ENCODE measurements at regions of chr19 and their contacts with region 1.

Region 1: GRCh38 chr19:49468746-49469447 is 5.1 kb upstream of the FLT3LG start:
- DNase-seq: peak; percentile 98
- H3K4me3 Mint-ChIP-seq: peak overlapping the region; percentile 87
- H3K27ac Mint-ChIP-seq: peak overlapping the region; percentile 100
- H3K4me1 Mint-ChIP-seq: peaks cover 42% of the 10 kb centered on the region
- H3K27me3 Mint-ChIP-seq: no peaks in the 10 kb centered on the region

Region 2: DNA sequence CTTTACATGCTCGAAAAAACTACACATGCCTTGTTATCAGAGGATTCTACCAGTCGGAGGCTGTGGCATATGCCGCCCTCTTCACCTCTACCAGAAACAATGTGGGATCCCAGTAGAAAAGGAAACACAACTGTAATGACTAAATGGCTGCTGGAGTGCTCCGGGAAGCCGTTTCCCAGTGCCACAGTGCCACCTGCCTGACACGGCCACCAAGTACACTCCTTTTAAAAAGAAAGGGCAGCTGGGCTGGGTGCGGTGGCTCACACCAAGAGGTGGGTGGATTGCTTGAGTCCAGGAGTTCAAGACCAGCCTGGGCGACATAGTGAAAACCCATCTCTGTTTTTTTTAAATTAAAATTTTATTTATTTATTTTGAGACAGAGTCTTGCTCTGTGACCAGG is 244.0 kb before region 1 on chr19:
- intact Hi-C with region 1: loop called (anchors 1 kb)
- DNase-seq: peak; percentile 79
- H3K4me3 Mint-ChIP-seq: no peak overlapping the region
- H3K27ac Mint-ChIP-seq: no peak overlapping the region
- H3K4me1 Mint-ChIP-seq: peaks cover 6% of the 10 kb centered on the region
- H3K27me3 Mint-ChIP-seq: peaks cover 8% of the 10 kb centered on the region

Region 3: GRCh38 chr19:49271080-49271762 is 197.7 kb before region 1 on chr19:
- intact Hi-C with region 1: loop called (anchors 1 kb)
- DNase-seq: no peak
- H3K4me3 Mint-ChIP-seq: no peak overlapping the region
- H3K27ac Mint-ChIP-seq: no peak overlapping the region
- H3K4me1 Mint-ChIP-seq: peaks cover 3% of the 10 kb centered on the region
- H3K27me3 Mint-ChIP-seq: peaks cover 20% of the 10 kb centered on the region

Region 4: DNA sequence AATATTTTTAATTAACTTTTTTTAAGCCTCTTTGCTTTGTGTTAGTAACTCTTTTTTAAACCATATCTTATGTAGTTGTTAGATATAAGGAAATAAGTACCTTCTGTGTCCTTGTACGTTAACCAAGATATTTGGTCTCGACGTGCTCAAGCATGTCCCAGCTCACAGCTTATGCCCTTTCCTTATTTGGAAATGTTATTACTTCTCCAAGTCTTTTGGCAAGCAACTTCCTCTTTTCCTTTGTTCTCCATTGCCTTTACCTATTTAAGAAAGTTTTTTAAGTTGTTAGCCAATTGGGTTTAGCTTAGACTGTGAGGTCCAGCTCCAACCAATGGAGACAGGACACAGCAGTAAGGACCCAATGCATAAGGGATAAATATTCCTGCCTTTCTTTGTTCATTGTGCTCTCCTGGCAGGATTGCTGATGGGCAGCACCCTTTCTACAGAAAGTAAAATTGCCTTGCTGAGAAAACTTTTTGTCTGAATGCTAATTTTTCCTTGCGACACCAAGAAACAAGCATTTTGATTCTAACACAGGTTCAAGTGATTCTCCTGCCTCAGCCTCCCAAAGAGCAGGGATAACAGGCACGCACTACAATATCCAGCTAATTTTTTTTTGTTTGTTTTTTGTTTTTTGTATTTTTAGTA is 100.1 kb before region 1 on chr19:
- intact Hi-C with region 1: no loop called
- DNase-seq: no peak
- H3K4me3 Mint-ChIP-seq: no peak overlapping the region
- H3K27ac Mint-ChIP-seq: no peak overlapping the region
- H3K4me1 Mint-ChIP-seq: peaks cover 2% of the 10 kb centered on the region
- H3K27me3 Mint-ChIP-seq: peaks cover 10% of the 10 kb centered on the region

Region 5: GRCh38 chr19:49391581-49392399 is 77.1 kb before region 1 on chr19:
- intact Hi-C with region 1: loop called (anchors 1 kb)
- DNase-seq: peak; percentile 94
- H3K4me3 Mint-ChIP-seq: no peak overlapping the region
- H3K27ac Mint-ChIP-seq: no peak overlapping the region
- H3K4me1 Mint-ChIP-seq: peaks cover 9% of the 10 kb centered on the region
- H3K27me3 Mint-ChIP-seq: peaks cover 5% of the 10 kb centered on the region

Region 6: DNA sequence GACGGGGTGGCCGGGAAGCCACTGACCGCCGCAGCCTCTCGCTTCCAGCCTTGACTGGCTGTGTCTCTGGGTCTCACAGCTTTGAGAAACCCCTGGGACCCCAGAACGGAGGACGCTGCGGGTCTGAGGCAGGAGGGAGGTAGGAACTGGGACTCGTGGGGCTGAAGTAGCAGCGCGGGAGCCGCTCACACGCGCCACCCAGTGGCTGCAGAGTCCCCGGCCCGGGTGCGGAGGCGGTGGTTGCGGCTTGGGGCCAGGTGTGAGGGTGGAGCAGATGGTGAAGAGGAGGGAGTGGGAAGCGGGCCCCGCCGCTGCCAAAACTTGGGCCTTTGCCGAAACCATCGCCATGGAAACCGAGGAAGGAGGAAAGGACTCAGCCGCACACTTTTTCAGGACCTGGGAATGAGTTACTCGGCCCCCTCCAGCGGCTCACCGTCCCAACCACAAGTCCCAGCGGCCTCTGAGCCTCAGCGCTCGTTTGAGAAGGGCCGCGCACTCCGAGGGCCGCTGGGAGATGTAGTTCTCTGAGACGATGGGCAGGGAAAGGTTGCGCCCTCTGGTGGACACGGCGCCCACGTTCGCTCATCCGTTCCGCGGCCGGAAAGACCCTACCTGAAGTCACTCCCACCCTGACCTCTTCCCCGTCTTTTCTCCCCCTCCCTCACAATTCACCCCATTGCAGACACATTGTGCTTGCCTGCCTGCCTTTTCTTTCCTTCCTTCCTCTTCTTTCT is 25.4 kb before region 1 on chr19:
- intact Hi-C with region 1: loop called (anchors 1 kb)
- DNase-seq: peak; percentile 98
- H3K4me3 Mint-ChIP-seq: peak overlapping the region; percentile 89
- H3K27ac Mint-ChIP-seq: peak overlapping the region; percentile 88
- H3K4me1 Mint-ChIP-seq: peaks cover 45% of the 10 kb centered on the region
- H3K27me3 Mint-ChIP-seq: peaks cover 39% of the 10 kb centered on the region

Region 7: GRCh38 chr19:49451430-49452181 is 17.3 kb before region 1 on chr19 and contains the start of gene PIH1D1:
- intact Hi-C with region 1: loop called (anchors 1 kb)
- DNase-seq: peak; percentile 98
- H3K4me3 Mint-ChIP-seq: peak within 1 kb of the TSS; percentile 91
- H3K27ac Mint-ChIP-seq: peak within 1 kb of the TSS; percentile 100
- H3K4me1 Mint-ChIP-seq: peaks cover 38% of the 10 kb centered on the region
- H3K27me3 Mint-ChIP-seq: no peaks in the 10 kb centered on the region
- total RNA-seq, gene PIH1D1: 134 and 135 TPM in 2 replicates

Measured in activated CD4-positive, alpha-beta T cell treated with anti-CD3 and anti-CD28 coated beads, Interleukin-2, amount 10 ng/mL, durations not matched to agents 24 days and 14 days (primary cell).